ENCODE measurements at regions of chr12 and their contacts with region 1.

Region 1: GRCh38 chr12:80257920-80258319 is 158.6 kb downstream of the OTOGL start:
- DNase-seq: no peak
- CTCF ChIP-seq: no peak

Region 2: DNA sequence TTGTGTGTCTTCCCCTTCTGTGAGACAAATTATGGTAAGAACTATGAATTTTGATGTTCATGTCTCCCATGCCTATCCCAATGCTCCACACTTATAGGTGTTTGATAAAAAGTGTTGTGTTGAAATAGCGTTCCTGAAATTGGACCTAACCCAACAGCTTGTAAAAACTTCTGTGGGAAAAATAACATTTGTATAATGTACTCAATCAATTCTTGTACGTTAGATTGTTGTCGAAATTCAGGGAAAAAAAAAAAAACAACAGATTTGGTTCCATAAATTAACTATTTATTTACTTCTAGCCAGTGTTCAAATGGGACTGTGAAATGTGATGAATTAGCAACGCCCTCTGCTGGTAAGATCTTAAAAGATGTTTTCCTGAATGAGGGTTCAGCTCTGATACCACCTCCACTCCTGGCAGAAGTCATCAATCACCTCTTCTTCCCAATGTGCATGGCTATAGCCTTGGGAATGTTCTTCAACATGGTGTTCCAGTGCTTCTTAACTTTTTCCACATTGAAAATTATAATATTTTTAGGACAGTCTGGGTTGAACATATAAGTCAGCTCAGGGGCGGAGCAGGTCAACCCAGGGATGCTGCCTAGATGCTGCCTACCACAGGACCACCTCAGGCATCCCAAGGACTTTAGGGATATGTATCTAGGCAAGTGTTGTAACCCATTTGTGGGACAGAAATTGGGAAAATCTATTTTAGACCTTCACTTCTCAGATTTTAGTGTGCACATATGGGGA is 12.1 kb after region 1 on chr12:
- CTCF ChIA-PET with region 1: interaction called, 17 read pairs
- POLR2A ChIA-PET with region 1: no interaction called
- DNase-seq: peak; percentile 14
- CTCF ChIP-seq: peak; percentile 64

Region 3: GRCh38 chr12:80325167-80325959 is 67.4 kb after region 1 on chr12:
- CTCF ChIA-PET with region 1: no interaction called
- POLR2A ChIA-PET with region 1: no interaction called
- DNase-seq: no peak
- CTCF ChIP-seq: no peak

Region 4: DNA sequence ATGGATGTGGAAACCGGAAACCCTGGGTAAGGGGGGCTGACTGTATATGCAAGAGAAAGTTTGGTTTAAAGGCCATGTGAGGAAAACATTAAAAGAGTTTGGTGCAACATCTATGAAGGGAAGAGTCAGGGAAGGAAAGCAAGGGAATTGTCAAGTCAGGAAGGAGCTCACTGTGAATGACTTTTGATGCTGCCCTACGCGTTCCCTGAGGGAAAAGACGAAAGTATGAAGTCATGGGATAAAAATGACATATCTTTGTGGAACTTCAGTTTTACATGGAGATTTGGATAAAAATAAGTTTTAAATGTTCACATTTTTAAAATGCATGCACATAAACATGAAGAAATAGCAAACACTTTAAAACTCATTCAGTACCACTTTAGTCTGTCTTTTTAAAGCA is 85.9 kb after region 1 on chr12:
- CTCF ChIA-PET with region 1: no interaction called
- POLR2A ChIA-PET with region 1: no interaction called
- DNase-seq: no peak
- CTCF ChIP-seq: no peak

Region 5: GRCh38 chr12:80485222-80485987 is 227.5 kb after region 1 on chr12:
- CTCF ChIA-PET with region 1: no interaction called
- POLR2A ChIA-PET with region 1: no interaction called
- DNase-seq: no peak
- CTCF ChIP-seq: no peak

Measured in GM10248 (cell line).